Dendritic cell treated with granulocyte-macrophage colony-stimulating factor and Interleukin-4, amounts not matched to agents 40 ng/mL and 50 ng/mL, for 4 days (primary cell): ENCODE measurements at regions of chr5 and their contacts with region 1.

Region 1: DNA sequence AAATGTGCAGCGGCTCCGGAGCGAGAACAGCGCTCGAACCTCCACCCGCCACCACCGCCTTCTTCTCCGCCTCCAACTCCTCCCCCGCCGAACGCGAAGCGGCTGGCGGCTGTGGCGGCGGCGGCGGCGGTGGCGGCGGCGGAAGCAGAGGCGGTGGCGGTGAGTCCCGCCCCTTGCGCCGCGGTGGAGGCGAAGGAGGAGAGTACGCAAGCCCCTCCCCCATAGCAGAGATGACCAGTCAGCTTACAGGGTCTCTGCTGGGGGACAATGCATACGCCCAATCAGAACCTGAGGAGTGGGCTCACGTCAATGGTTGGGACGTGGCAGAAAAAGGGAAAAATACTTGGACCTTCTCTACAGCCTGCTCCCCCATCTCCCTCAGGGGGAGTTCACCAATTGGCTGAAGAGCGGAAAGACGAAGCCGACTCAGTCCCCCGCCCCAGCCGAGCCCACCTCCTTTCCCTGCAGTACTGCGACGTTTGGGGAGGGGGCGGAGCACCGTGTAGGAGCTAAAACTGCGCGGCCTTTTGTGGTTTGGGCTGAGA is at the start of gene PJA2:
- H3K4me3 Mint-ChIP-seq: peak within 1 kb of the TSS; percentile 97
- H3K27ac Mint-ChIP-seq: peak within 1 kb of the TSS; percentile 98
- H3K4me1 Mint-ChIP-seq: peaks cover 22% of the 10 kb centered on the region
- H3K27me3 Mint-ChIP-seq: no peaks in the 10 kb centered on the region

Region 2: GRCh38 chr5:108143581-108143980 is 1266.3 kb before region 1 on chr5:
- intact Hi-C with region 1: no loop called
- H3K4me3 Mint-ChIP-seq: no peak overlapping the region
- H3K27ac Mint-ChIP-seq: no peak overlapping the region
- H3K4me1 Mint-ChIP-seq: peaks cover 16% of the 10 kb centered on the region
- H3K27me3 Mint-ChIP-seq: no peaks in the 10 kb centered on the region

Region 3: DNA sequence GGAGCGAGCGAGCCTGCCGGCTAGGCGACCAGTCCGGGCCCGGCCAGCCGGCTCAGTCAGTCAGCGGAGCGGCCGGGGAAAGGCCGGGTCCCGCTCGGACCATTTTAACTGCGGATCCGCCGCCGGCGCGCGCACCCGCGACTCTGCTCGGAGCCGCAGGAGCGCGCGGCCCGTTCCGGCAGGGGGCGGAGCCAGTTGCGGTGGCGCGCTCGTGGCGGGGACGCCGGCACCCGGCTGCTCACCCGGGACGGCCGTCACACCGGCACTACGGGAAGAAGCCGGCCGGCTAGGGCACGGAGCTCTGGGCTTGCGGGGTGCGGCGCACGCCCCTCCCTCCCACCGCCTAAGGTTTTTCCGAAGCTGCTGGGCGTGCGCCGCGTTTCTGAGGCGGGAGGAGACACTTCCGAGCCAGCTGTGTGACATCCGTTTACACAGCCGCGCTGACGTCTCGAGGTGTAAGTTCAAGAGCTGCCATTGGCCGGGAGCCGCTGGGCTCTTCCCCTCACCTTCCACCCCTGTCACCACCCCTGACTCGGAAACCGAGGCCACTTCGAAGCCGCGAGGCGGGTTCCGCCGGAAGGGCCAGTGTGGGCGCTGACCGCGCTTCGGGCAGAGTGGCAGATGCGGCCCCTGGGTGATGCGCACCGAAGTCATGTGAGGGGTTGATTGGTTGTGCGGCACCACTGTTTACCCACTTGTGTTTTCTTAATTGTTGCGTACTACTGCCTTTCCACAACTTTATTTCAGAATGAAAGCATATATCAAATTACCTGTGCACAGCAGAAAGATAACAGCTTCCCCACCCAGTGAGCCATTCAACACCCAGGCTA is 1027.7 kb before region 1 on chr5 and contains the start of gene FBXL17:
- intact Hi-C with region 1: loop called (anchors 1 kb)
- H3K4me3 Mint-ChIP-seq: peak within 1 kb of the TSS; percentile 80
- H3K27ac Mint-ChIP-seq: peak within 1 kb of the TSS; percentile 93
- H3K4me1 Mint-ChIP-seq: peaks cover 25% of the 10 kb centered on the region
- H3K27me3 Mint-ChIP-seq: peaks cover 7% of the 10 kb centered on the region

Region 4: DNA sequence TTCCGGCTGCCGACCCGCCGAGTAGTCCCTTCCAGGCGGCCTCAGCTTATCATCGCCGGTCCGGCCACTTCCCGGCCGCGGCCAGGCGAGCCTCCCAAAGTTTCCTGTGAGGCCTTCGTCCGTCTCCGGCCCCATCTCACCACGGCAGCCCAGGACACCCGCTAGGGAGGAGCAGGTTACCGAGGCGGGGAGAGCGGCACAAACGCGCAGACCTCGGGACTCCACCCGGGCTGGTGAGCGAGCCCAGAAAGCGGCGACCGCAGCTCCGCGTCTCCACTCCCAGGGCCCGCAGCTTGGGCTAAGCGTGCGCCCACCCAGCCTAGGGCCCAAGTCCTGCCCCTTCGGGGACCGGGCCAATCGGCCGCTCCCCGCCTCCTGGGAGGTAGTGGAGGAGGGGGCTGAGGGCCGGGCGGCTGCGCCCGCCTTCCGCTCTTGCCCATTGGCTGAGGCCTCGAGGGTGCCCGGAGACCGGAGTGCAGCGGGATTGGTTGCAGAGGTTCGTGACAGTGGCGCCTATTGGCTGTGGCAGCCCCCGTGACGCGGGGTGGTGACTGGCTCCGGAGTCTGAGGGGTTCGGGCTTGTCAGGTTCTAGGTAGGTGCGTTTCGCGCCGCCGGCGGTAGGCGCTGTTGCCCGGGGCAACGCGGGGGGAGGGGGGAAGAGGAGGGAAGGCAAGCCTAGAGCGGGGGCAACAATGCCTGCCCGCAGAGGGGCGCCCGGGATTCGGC is 661.4 kb before region 1 on chr5:
- intact Hi-C with region 1: loop called (anchors 5 kb)
- H3K4me3 Mint-ChIP-seq: peak overlapping the region; percentile 98
- H3K27ac Mint-ChIP-seq: peak overlapping the region; percentile 99
- H3K4me1 Mint-ChIP-seq: peaks cover 7% of the 10 kb centered on the region
- H3K27me3 Mint-ChIP-seq: peaks cover 3% of the 10 kb centered on the region

Region 5: DNA sequence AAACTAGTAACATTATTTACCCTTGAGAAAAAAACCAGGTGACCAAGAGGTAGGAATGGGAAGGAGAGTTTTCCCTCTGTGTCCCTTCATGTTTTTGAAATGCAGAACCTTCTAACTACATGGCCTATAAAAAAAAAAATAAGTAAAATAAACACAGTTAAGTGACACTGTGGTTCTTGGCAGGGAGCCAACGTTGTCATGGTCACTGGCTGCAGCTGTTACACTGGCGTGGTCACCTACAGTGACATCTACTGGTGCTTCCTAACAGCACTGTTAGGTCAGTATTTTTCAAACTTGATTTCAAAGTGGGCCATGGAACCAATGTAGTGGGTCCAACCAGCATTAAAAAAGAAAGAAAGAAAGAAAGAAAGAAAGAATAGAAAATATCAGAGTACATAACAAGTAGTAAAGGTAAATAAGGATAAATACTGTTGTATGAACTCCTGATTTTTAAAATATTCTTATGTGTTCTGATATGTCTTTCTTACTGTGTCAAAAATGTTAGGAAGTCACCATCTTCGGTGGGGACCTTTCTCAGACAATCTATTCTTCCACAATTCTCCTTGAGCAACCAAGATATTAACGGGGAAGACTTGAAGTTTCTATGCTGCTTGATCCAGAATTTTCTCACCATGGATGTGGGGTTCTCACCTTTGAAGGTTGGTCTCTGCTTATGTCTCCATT is 59.0 kb after region 1 on chr5:
- intact Hi-C with region 1: loop called (anchors 5 kb)
- H3K4me3 Mint-ChIP-seq: no peak overlapping the region
- H3K27ac Mint-ChIP-seq: no peak overlapping the region
- H3K4me1 Mint-ChIP-seq: peaks cover 5% of the 10 kb centered on the region
- H3K27me3 Mint-ChIP-seq: no peaks in the 10 kb centered on the region

Region 6: GRCh38 chr5:110738812-110739651 is 1329.1 kb after region 1 on chr5 and contains the start of gene SLC25A46:
- intact Hi-C with region 1: loop called (anchors 5 kb)
- H3K4me3 Mint-ChIP-seq: peak within 1 kb of the TSS; percentile 96
- H3K27ac Mint-ChIP-seq: peak within 1 kb of the TSS; percentile 95
- H3K4me1 Mint-ChIP-seq: peaks cover 33% of the 10 kb centered on the region
- H3K27me3 Mint-ChIP-seq: peaks cover 7% of the 10 kb centered on the region